Motor neuron (in vitro differentiated cells): ENCODE measurements at regions of chrX and their contacts with region 1.

Region 1: DNA sequence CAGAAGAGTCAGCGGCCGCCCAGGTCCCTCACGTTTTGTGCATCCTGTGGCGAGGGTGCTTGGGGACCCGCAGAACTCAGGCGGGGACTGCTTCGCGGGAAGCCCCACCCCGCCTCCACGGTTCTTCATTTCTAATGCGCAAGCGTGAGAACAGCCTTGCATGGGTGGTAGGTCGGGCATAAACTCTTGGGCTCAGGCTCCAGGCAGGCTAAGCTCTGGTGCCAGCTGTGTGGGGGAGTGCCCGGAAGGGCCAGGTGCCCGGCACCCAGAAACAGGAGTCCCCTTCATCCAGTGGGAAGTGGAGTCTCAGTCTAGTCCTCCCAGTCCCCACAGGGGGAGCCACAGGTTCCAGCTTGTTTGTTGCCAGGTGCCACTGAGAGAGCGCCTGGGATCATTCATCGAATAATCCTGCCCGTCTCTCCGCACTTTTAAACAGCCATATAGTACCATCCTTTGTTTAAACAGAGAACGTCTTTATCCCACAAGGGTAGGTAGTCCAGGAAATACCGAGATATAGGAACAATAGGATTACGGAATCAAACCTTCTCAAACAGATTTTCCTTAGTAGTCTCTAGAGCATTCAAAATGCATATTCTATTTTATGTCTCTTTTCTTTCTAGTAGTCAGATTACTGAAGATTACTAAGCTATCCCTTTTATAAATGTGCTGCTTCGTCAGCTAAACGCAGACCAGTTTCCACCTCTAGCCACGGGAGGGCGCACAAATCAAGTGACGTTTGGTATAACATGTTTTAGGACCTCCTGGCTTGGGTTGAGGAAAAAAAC is 12.7 kb upstream of the RBBP7 start:
- ATAC-seq: peak; percentile 67 to 88 (median 82)
- H3K4me3 ChIP-seq: peak overlapping the region; percentile 25 to 36 (median 31)
- H3K27ac ChIP-seq: no peak overlapping the region
- H3K4me1 ChIP-seq: no peaks in the 10 kb centered on the region

Region 2: DNA sequence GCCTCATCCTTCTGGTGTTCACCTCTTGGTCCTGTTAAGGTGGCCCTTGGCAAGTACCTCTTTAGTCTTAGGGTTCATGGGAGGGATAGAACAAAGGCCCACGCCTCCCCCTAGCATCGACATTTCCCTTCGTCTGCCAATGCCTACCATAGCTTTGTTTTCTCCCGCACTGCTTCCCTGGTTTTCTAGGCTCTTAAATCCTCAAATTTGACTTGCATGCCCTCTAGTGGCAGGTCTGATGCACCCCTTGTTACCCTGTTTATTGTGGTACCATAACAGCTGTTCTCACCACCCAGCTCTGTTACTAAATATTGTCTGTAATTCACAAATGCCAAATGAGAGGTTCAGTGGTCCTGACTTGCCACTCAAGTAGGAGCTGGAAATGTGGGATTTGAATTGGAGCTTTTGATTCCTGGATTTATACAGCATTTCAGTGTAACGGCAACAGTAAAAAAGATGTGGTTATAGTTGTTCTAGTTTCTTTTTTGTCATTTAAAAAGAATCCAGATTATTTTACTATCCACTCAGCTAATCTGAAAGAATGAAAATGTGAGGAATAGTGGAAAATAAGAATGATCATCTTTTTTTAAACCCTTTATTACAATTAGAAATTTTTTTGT is 163.7 kb after region 1 on chrX:
- in situ Hi-C with region 1: loop called in 1 of 9 experiments (anchors 25 kb)
- ATAC-seq: peak in 5 of 8 experiments; percentile 46 to 96 (median 82)
- H3K4me3 ChIP-seq: no peak overlapping the region
- H3K27ac ChIP-seq: no peak overlapping the region
- H3K4me1 ChIP-seq: no peaks in the 10 kb centered on the region